Posterior vena cava (tissue), 2 donors: ENCODE measurements at regions of chr17 and their contacts with region 1.

Region 1: DNA sequence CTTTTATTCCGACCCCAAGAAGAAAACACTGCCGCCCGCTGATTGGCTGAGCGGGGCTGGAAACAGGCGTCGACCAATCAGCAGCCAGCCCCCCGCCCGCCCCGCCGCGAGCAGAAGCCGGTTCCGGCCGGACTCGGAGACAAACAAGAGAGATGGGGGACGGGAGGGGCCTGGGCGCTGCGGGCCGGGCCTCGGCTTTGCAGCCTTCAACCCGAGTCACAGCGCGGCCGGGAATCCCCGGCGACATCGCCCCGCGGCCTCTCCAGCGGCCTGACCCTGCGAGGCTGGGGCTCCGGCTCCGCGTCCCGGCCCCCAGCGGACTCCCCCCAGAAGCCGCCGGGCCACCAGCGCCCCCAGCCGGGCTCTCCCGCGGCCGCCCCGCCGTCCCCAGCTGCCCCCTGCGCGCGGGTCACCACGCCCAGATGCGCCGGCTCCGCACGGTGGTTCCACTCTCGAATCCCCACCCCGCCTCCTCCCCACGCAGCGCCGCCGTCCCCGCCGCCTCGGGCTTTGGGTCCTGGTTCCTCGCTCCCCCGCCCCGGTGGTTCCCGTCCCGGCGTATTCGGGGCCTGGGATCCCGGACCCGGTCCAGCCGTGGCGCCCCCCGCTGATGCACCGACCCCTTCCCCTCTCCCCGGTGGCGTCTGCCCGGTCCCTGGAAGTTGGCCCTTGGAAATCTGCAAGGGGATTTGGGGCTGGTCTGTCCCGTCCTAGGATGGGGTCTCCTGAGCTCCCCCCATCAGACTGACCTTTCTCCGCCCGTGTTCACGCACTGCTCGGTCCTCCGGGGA is 417 bp upstream of the SLC43A2 start:
- DNase-seq: peak; percentile 98

Region 2: GRCh38 chr17:1590031-1590748 is 38.9 kb before region 1 on chr17:
- intact Hi-C with region 1: loop called in 1 of 2 experiments (anchors 5 kb)
- DNase-seq: peak; percentile 93

Region 3: DNA sequence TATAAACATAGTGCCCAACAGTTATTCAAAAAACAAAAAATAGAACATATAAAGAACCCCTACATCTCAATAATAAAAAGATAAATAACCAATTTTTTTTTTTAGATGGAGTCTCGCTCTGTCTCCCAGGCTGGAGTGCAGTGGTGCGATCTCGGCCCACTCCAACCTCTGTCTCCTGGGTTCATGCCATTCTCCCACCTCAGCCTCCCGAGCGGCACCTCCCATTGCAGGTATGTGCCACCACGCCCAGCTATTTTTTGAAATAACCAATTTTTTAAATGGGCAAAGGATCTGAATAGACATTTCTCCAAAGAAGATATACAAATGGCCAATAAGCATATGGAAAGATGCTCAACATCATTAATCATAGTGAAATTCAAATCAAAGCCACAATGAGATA is 32.6 kb before region 1 on chr17:
- intact Hi-C with region 1: loop called (anchors 1 to 5 kb)
- DNase-seq: no peak

Region 4: GRCh38 chr17:1643293-1643998 is 14.4 kb after region 1 on chr17:
- intact Hi-C with region 1: no loop called
- DNase-seq: no peak